ENCODE measurements at regions of chr1 and their contacts with region 1.

Region 1: GRCh38 chr1:155172732-155173477 is at the start of gene KRTCAP2:
- DNase-seq: peak; percentile 98
- ATAC-seq: peak; percentile 84
- H3K4me3 Mint-ChIP-seq: peak within 1 kb of the TSS; percentile 82
- H3K27ac Mint-ChIP-seq: peak within 1 kb of the TSS; percentile 90
- H3K4me1 Mint-ChIP-seq: peaks cover 51% of the 10 kb centered on the region
- H3K27me3 Mint-ChIP-seq: no peaks in the 10 kb centered on the region
- total RNA-seq, gene KRTCAP2: 166 to 177 TPM

Region 2: DNA sequence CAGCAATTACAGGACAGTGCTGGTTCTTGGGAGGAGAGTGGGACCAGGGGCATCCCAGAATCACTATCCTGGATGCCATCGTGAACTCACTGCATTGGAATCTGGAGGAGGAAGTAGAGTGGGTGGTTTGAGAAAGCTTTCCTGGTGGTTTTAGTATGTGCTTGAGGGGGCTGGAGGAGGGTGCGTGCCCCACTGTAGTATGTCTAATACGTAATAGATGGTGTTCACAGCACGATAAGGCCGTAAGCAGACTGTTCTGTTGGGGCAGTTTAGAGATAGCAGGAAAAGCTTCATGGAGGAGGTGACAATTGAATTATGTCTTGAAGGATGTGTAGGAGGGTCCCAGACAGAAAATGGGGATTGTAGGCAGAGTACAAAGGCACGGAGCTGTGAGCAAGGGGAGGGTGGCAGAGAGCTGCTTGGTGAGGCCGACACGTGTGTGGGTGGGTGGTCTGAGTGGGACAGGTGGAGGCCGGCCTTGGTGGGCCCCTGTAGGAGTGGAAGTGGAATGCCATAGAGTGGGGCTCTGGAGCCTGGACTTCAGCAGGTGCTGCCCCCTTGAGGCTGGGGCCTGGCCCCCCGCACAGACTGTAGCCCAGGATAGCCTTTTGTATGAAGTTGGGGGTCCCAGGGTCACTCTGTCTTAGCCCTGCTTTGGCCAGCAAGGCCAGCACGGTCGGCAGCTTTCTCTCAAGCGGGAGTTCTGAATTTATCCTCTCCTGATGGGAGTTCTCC is 730.7 kb before region 1 on chr1:
- CTCF ChIA-PET with region 1: no interaction called
- DNase-seq: no peak
- ATAC-seq: no peak
- H3K4me3 Mint-ChIP-seq: no peak overlapping the region
- H3K27ac Mint-ChIP-seq: no peak overlapping the region
- H3K4me1 Mint-ChIP-seq: peaks cover 49% of the 10 kb centered on the region
- H3K27me3 Mint-ChIP-seq: peaks cover 61% of the 10 kb centered on the region

Region 3: DNA sequence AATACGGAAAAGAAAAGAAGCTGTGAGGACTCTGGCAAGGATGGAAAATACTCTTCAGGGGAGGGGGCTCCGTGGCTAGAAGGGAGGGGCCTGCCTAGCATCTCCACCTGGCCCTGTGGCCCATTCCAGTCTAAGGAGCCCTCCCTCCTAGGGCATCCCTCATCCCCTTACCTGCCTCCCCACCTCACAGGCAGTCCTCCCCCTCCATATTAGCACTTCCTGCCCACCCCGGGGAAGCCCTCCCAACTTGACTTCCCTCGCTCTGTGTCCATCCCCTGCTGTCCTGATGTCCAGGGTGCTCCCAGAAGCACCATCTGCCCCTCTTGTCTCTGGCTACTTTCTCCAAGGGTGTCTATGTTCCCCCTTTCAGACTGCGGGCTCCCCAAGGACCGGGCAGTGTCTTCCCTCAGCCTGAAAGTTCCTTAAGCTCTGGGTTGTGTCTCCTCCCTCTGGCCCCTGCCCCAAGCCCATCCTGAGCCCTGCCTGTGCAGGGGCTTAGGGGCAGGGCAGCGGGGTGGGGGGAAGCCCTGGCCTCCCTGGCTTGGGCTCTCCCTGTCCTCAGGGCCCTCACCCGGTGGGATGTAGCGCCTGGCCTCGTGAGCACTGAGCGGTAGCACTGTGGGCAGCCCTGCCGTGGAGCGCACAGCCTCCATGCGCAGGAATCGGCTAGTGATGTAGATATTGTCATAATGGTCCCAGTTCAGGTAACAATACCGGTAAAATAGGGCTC is 143.2 kb before region 1 on chr1:
- CTCF ChIA-PET with region 1: no interaction called
- DNase-seq: no peak
- ATAC-seq: no peak
- H3K4me3 Mint-ChIP-seq: no peak overlapping the region
- H3K27ac Mint-ChIP-seq: no peak overlapping the region
- H3K4me1 Mint-ChIP-seq: no peaks in the 10 kb centered on the region
- H3K27me3 Mint-ChIP-seq: peaks cover 6% of the 10 kb centered on the region

Region 4: DNA sequence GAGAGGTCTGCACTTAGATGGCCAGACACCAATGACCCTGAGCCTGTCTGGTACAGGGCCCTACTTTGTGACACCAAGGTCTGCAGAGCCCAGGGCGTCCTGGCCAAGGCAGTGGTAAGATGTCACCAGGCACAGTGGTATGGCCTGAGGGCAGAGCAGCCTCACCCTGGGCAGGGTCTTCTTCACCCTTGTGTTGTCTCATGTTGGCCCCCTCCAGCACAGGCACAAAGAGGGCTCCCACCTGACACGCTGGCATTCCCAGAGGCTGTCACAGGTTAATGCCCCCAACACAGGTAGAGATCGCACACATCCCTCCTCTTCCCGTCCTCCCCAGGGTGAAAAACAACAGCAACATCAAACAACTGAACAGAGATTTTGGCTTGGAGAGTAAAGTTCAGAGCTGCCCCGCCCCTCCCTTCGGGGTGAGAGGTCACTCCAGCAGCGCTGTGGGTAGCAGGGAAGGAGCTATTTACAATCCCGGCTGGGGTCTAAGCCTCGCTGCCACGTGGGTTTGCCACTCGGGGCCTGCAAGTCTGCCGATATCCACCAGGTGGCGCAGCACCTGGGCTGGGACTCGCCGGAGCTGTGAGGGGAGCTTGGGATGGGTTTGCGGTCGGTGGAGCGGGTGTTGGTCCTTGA is 81.7 kb before region 1 on chr1:
- CTCF ChIA-PET with region 1: interaction called, 295 read pairs
- DNase-seq: peak; percentile 84
- ATAC-seq: peak; percentile 80
- H3K4me3 Mint-ChIP-seq: no peak overlapping the region
- H3K27ac Mint-ChIP-seq: no peak overlapping the region
- H3K4me1 Mint-ChIP-seq: peaks cover 7% of the 10 kb centered on the region
- H3K27me3 Mint-ChIP-seq: peaks cover 17% of the 10 kb centered on the region

Region 5: DNA sequence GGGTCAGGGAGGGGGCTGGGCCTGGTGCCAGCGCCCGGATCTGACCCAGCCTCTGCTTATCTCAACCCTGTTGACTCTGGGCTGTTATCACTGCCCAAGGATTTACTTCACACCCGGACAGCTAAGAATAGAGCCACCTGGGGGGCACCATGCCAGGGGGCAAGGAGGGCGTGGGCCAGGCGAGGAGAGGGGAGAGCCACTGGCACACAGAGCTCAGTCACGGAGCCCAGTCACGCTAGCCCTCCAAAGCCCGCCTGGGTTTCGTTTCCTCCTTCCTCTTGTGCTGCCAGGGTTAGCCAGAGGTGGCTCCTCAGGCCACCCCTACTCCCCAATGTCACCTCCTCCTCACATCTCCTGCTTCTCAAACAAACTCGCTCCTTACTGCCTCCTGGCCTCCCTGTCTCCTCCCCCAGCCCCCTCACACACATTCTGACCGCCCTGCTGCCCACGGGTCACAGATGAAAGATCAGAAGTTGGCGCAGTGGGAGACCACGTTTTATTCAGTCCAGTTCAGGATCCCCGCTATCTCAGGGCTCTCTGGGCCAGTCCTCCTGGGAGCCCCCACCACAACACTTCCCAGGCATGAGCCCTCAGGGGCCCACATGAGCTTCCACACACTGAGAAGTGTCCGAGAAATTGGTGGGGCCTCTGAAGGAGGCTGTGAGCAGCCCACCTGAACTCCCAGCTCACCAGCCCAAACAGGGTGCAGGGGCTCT is 12.6 kb after region 1 on chr1:
- CTCF ChIA-PET with region 1: interaction called, 11 read pairs
- DNase-seq: no peak
- ATAC-seq: peak; percentile 54
- H3K4me3 Mint-ChIP-seq: no peak overlapping the region
- H3K27ac Mint-ChIP-seq: peak overlapping the region; percentile 10
- H3K4me1 Mint-ChIP-seq: peaks cover 11% of the 10 kb centered on the region
- H3K27me3 Mint-ChIP-seq: no peaks in the 10 kb centered on the region

Region 6: DNA sequence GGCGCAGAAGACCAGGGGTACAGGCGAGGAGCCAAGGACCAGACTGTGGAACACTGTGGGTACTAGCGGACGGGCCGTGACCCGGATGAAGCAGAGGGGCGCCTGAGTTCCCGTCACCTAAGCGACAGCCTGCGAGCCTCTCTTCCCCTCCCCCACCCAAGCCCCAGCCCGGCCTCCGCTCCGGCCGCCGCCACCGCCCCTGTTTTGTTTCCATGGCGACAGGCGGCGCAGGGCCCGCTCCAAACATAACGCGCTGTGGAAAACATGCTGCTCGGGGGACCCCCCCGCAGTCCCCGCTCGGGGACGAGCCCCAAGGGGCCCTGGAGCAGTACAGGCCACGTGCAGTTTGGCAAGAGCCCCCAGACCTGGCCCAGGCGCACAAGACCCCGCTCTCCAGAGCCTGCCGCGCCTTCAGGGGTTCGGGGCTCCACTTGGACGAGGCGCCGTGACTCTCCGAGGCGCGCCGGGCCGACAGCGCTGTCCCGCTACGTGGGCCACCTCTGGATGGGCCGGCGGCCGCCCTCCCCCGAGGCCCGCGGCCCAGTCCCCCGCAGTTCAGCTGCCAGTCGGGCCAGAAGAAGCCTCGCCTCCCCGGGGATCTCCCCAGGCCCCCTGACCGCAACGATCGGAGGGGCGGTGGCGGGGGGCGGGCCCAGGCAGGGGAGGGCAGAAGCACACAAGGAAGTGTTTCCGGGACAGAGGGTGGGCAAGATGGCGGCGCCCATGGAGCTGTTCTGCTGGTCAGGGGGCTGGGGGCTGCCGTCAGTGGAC is 35.8 kb after region 1 on chr1 and contains the start of gene MTX1:
- CTCF ChIA-PET with region 1: interaction called, 55 read pairs
- DNase-seq: peak; percentile 92
- ATAC-seq: peak; percentile 78
- H3K4me3 Mint-ChIP-seq: peak within 1 kb of the TSS; percentile 83
- H3K27ac Mint-ChIP-seq: peak within 1 kb of the TSS; percentile 88
- H3K4me1 Mint-ChIP-seq: peaks cover 34% of the 10 kb centered on the region
- H3K27me3 Mint-ChIP-seq: no peaks in the 10 kb centered on the region
- total RNA-seq, gene MTX1: 39.0 to 48.6 TPM

Region 7: GRCh38 chr1:155244368-155245162 is 71.7 kb after region 1 on chr1:
- CTCF ChIA-PET with region 1: interaction called, 12 read pairs
- DNase-seq: peak; percentile 100
- ATAC-seq: peak; percentile 97
- H3K4me3 Mint-ChIP-seq: peak overlapping the region; percentile 74
- H3K27ac Mint-ChIP-seq: peak overlapping the region; percentile 98
- H3K4me1 Mint-ChIP-seq: peaks cover 51% of the 10 kb centered on the region
- H3K27me3 Mint-ChIP-seq: peaks cover 3% of the 10 kb centered on the region

Measured in activated CD8-positive, alpha-beta memory T cell treated with anti-CD3 and anti-CD28 coated beads, Interleukin-2, amount 10 ng/mL, durations not matched to agents 7 days and 5 days (primary cell).